Activated T-helper 2 cell treated with anti-CD3 and anti-CD28 coated beads, Interferon-gamma antibody, Interleukin-2, Interleukin-4, amounts not matched to agents 10 μg/mL and 5 μg/mL and 100 μg/mL, durations not matched to agents 14 hours and 24 hours and 36 hours (primary cell): ENCODE measurements at regions of chr12 and their contacts with region 1.

Region 1: DNA sequence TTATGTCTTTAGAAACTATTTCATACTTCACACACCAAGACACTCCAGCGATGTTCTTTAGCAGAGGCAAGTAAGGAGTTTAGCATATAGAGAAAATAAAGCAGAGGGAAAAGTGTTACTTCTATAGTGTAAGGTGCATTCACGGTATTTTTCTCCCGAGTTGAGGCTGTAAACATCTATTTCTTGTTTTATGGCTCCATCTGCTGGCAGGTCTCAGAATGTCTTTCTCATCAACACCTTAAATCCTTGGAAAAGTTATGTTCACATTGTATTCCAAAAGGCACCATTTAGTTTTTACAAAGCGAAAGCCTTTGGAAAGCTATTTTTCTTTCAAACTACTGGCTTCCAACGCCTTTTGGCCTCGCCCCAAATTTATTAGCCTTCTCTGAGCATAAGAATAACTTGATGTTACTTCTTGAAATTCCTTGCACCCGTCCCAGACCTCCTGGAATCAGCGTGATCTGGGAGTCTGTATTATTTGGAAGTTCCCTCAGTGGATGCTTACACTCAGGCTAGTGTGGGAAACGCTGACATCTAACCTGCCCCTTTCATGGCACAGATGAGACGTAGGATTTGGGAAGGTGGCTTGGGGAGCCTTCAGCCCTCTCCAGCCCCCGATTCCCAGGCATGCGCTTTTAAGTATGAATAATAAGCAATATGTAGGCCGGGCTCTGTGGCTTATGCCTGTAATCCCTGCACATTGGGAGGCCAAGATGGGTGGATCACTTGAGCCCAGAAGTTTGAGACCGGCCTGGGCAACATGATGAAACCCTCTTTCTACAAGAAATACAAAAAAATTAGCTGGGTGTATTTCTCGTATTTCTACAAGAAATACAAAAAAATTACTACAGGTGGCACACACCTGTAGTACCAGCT is 1.9 kb upstream of the PIWIL1 start:
- DNase-seq: no peak
- H3K4me3 Mint-ChIP-seq: no peak overlapping the region
- H3K27ac Mint-ChIP-seq: no peak overlapping the region
- H3K4me1 Mint-ChIP-seq: peaks cover 6% of the 10 kb centered on the region
- H3K27me3 Mint-ChIP-seq: peaks cover 18% of the 10 kb centered on the region

Region 2: GRCh38 chr12:130041983-130042812 is 293.6 kb before region 1 on chr12:
- intact Hi-C with region 1: loop called (anchors 1 kb)
- DNase-seq: peak; percentile 23
- H3K4me3 Mint-ChIP-seq: no peak overlapping the region
- H3K27ac Mint-ChIP-seq: no peak overlapping the region
- H3K4me1 Mint-ChIP-seq: no peaks in the 10 kb centered on the region
- H3K27me3 Mint-ChIP-seq: peaks cover 20% of the 10 kb centered on the region

Region 3: GRCh38 chr12:130162267-130162666 is 173.5 kb before region 1 on chr12 and contains the start of gene FZD10:
- intact Hi-C with region 1: loop called (anchors 5 kb)
- DNase-seq: no peak
- H3K4me3 Mint-ChIP-seq: peak within 1 kb of the TSS; percentile 58
- H3K27ac Mint-ChIP-seq: no peak within 1 kb of the TSS
- H3K4me1 Mint-ChIP-seq: peaks cover 4% of the 10 kb centered on the region
- H3K27me3 Mint-ChIP-seq: peaks cover 37% of the 10 kb centered on the region
- total RNA-seq, gene FZD10: not detected in 2 replicates

Region 4: GRCh38 chr12:130281153-130281799 is 54.5 kb before region 1 on chr12:
- intact Hi-C with region 1: loop called (anchors 10 kb)
- DNase-seq: peak; percentile 22
- H3K4me3 Mint-ChIP-seq: no peak overlapping the region
- H3K27ac Mint-ChIP-seq: no peak overlapping the region
- H3K4me1 Mint-ChIP-seq: peaks cover 7% of the 10 kb centered on the region
- H3K27me3 Mint-ChIP-seq: no peaks in the 10 kb centered on the region

Region 5: GRCh38 chr12:130639476-130640424 is 304.0 kb after region 1 on chr12:
- intact Hi-C with region 1: no loop called
- DNase-seq: no peak
- H3K4me3 Mint-ChIP-seq: no peak overlapping the region
- H3K27ac Mint-ChIP-seq: no peak overlapping the region
- H3K4me1 Mint-ChIP-seq: no peaks in the 10 kb centered on the region
- H3K27me3 Mint-ChIP-seq: no peaks in the 10 kb centered on the region